ENCODE measurements at regions of chr1 and their contacts with region 1.

Region 1: GRCh38 chr1:221435504-221435904 is 306.4 kb downstream of the DUSP10 start:
- DNase-seq: peak; percentile 62
- ATAC-seq: peak; percentile 56
- H3K4me3 ChIP-seq: no peak overlapping the region
- H3K4me3 Mint-ChIP-seq: no peak overlapping the region
- H3K27ac ChIP-seq: no peak overlapping the region
- H3K27ac Mint-ChIP-seq: no peak overlapping the region
- H3K4me1 ChIP-seq: peaks cover 10 to 11% of the 10 kb centered on the region in 2 donors
- H3K4me1 Mint-ChIP-seq: peaks cover 18% of the 10 kb centered on the region
- H3K27me3 ChIP-seq: no peaks in the 10 kb centered on the region
- H3K27me3 Mint-ChIP-seq: peaks cover 9% of the 10 kb centered on the region
- CTCF ChIP-seq: peak; percentile 96

Region 2: DNA sequence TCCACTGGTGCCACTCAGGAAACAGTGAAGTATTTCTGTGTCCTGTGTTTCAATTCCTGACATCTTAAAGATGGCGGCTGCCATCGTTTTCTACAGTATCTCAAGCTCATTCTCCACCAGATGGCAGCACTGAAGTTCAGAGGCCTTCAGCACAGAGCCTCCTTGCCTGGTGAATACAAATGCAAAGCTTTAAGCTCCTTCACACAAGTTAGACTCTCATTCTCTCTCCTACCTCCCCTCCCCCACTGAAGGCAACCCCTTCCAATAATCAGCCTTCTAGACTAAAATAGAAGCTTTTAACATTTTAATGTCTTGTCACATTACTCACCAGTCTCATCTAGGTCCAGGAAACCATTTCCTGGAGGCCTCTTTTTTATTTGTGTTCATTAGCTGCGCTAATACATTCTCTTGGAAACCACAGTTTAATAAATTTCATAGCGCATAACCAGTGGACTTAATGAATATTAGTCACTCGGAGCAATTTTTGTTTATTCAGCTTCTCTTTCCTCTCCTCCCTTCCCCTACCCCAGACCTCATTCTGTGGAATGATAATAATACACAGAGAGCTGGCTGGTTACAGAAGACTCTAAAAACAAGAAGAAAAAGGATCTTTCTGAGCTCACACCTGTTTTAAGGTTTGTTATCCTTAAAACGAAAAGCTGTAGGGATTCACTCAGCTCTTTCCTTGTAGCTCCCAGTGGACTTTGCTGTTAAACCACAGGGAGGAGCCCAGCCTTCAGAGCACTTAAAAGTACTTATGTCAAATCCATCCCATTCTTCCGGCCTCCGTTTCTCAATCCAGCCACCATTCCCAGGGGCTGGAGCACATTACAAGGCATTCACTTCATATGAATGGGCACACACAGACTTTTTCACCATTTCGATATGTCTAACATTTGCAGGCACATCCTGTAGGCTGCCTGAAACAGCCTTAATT is 171.4 kb before region 1 on chr1:
- CTCF ChIA-PET with region 1: interaction called, 25 read pairs
- POLR2A ChIA-PET with region 1: no interaction called
- intact Hi-C with region 1: loop called (anchors 2 kb)
- DNase-seq: peak; percentile 63
- ATAC-seq: peak; percentile 58
- H3K4me3 ChIP-seq: no peak overlapping the region
- H3K4me3 Mint-ChIP-seq: no peak overlapping the region
- H3K27ac ChIP-seq: no peak overlapping the region
- H3K27ac Mint-ChIP-seq: no peak overlapping the region
- H3K4me1 ChIP-seq: no peaks in the 10 kb centered on the region
- H3K4me1 Mint-ChIP-seq: no peaks in the 10 kb centered on the region
- H3K27me3 ChIP-seq: peaks cover 0 to 3% (median 0%) of the 10 kb centered on the region in 4 experiments
- H3K27me3 Mint-ChIP-seq: peaks cover 28% of the 10 kb centered on the region
- CTCF ChIP-seq: peak; percentile 67

Measured in B cell (primary cell).